ENCODE measurements at regions of chr7 and their contacts with region 1.

Region 1: DNA sequence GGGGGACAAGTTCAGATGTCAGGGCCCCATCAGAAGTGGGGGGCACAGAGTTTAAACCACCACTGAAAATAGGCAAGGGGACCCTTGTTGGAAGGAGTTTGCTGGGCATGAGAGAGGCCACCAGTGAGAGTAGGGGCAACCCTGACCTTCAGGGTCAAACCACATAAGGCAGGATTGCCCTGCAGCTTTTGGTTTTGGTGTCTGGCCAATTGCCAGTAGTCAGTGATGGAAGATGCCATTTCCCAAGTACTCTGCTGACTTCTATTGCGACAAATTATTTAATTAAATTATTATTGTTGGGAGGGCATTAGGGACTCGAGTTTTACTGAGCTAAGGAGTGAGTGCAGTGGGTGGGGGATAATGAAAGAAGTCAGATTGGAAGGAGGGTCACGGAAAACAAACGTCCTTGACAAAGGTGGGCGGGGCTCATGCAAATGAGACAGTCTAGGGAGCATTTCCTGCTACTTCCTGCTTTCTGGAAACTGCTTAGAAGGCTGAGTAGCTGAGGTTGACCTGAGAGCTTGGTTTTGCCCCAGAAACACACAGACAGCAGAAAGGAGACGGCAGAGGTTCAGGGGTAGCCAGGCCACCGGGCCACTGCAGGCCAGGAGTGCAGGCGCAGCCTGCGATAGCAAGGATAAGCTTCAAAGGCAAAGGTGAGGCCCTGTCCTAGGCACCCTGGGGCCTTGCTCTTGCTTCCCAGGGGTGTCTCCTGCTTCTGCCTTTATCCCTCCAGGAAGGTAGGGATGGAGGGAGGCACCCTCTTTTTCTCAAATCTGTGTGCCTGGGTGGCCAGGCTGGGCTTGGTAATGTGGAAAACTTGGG is 74.1 kb upstream of the ANLN start:
- DNase-seq: no peak
- ATAC-seq: no peak
- H3K4me3 Mint-ChIP-seq: no peak overlapping the region
- H3K27ac Mint-ChIP-seq: no peak overlapping the region
- H3K4me1 Mint-ChIP-seq: peaks cover 2% of the 10 kb centered on the region
- H3K27me3 Mint-ChIP-seq: peaks cover 2% of the 10 kb centered on the region

Region 2: DNA sequence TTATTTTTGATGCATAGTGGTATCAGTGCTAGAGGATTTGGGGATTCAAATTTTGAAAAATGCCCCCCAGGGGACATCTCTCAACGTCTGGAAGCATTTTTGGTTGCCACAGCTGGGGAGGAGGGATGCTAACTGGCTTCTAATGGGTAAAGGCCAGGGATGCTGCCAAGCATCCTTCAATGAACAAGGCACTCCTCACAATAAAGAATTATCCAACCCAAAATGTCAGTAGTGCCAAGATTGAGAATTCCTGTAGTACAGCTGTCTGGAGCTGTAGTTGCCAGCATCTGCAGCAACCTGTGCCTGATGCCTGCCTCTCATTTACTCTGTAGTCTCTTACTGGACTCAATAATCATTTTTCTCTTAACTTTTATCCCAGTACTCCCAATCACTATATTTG is 461.2 kb before region 1 on chr7:
- CTCF ChIA-PET with region 1: no interaction called
- POLR2A ChIA-PET with region 1: no interaction called
- intact Hi-C with region 1: no loop called
- DNase-seq: no peak
- ATAC-seq: no peak
- H3K4me3 Mint-ChIP-seq: no peak overlapping the region
- H3K27ac Mint-ChIP-seq: no peak overlapping the region
- H3K4me1 Mint-ChIP-seq: peaks cover 53% of the 10 kb centered on the region
- H3K27me3 Mint-ChIP-seq: no peaks in the 10 kb centered on the region

Region 3: GRCh38 chr7:35985126-35985754 is 330.3 kb before region 1 on chr7:
- CTCF ChIA-PET with region 1: interaction called, 46 read pairs
- POLR2A ChIA-PET with region 1: no interaction called
- intact Hi-C with region 1: loop called in 1 of 2 experiments (anchors 1 kb)
- DNase-seq: peak; percentile 87
- ATAC-seq: peak; percentile 100
- H3K4me3 Mint-ChIP-seq: no peak overlapping the region
- H3K27ac Mint-ChIP-seq: no peak overlapping the region
- H3K4me1 Mint-ChIP-seq: no peaks in the 10 kb centered on the region
- H3K27me3 Mint-ChIP-seq: no peaks in the 10 kb centered on the region

Region 4: DNA sequence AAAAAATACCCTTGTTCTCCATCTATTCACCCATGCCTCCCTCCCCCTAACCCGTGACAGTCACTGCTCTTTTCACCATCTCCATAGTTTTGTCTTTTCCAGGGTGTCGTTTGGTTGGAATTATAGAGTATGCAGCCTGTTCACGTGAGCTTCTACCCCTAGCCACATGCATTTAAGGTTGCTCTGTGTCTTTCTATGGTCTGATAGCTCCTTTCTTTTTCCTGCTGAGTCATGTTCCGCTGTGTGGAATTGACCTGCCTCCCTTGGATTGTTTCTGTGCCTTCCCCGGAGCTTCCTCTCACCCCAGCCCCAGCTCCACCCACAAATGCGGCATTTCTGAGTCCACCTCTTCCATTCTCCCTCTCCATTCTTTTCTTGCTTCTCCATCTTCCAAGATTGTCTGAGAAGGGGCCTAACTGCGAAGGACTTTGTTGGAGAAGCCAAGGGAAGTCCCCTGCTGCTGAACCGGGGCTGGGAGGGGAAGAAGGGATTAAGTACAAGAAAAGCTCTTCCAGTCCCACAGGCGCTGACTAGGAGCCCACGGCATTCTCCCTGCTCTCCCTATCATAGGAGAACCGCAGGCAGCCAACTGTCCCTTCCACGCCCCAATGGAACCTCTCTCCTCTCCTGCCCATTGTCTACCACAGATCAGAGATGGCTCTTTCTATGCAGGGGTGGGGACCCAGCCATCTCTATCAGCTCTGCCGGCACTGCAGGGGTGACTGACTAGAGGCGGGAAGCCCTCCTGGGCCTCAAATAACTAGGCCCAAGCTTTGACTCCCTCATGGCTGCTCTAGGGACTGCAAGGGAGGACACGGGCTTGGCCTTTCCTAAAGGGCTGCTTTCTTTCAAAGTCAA is 13.4 kb before region 1 on chr7:
- CTCF ChIA-PET with region 1: interaction called, 17 read pairs
- POLR2A ChIA-PET with region 1: no interaction called
- intact Hi-C with region 1: no loop called
- DNase-seq: no peak
- ATAC-seq: no peak
- H3K4me3 Mint-ChIP-seq: no peak overlapping the region
- H3K27ac Mint-ChIP-seq: no peak overlapping the region
- H3K4me1 Mint-ChIP-seq: no peaks in the 10 kb centered on the region
- H3K27me3 Mint-ChIP-seq: no peaks in the 10 kb centered on the region

Region 5: DNA sequence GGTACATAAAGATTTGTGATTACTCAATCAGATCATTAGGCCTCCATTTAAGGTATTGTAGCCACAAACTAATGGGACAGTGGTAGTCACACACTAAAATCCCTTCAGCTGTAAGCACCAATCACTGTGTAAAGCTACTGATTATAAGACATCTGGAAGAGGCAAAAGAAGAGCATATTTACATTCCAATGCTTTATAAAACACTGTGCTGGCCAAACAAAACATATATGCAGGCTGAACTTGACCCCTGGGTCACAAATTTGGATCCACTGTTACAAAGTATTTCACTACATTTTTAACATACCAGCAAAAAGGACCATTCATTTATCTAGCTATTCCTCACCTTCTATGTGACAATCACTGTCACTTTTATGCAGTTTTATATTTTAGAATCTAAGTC is 32.7 kb after region 1 on chr7:
- CTCF ChIA-PET with region 1: interaction called, 10 read pairs
- POLR2A ChIA-PET with region 1: no interaction called
- intact Hi-C with region 1: no loop called
- DNase-seq: no peak
- ATAC-seq: no peak
- H3K4me3 Mint-ChIP-seq: no peak overlapping the region
- H3K27ac Mint-ChIP-seq: no peak overlapping the region
- H3K4me1 Mint-ChIP-seq: no peaks in the 10 kb centered on the region
- H3K27me3 Mint-ChIP-seq: no peaks in the 10 kb centered on the region

Measured in activated CD4-positive, alpha-beta T cell treated with anti-CD3 and anti-CD28 coated beads for 36 hours (primary cell).